Endothelial cell of umbilical vein (primary cell): ENCODE measurements at regions of chr12 and their contacts with region 1.

Region 1: GRCh38 chr12:13094347-13094746 is 9.1 kb downstream of the GSG1 start:
- DNase-seq: peak; percentile 30
- H3K4me3 ChIP-seq: no peak overlapping the region
- H3K27ac ChIP-seq: peak overlapping the region; percentile 59
- H3K4me1 ChIP-seq: peaks cover 42% of the 10 kb centered on the region
- H3K27me3 ChIP-seq: no peaks in the 10 kb centered on the region
- CTCF ChIP-seq: no peak
- POLR2A ChIP-seq: no peak

Region 2: GRCh38 chr12:12999959-13000615 is 94.3 kb before region 1 on chr12 and contains the start of gene HEBP1:
- CTCF ChIA-PET with region 1: interaction called, 3 read pairs
- POLR2A ChIA-PET with region 1: interaction called, 4 read pairs
- dilution Hi-C with region 1: no loop called
- intact Hi-C with region 1: loop called (anchors 1 kb)
- DNase-seq: peak; percentile 89
- H3K4me3 ChIP-seq: peak within 1 kb of the TSS; percentile 55 to 87 (median 85)
- H3K27ac ChIP-seq: peak within 1 kb of the TSS; percentile 71
- H3K4me1 ChIP-seq: peaks cover 22% of the 10 kb centered on the region
- H3K27me3 ChIP-seq: no peaks in the 10 kb centered on the region
- CTCF ChIP-seq: no peak
- POLR2A ChIP-seq: peak; percentile 91
- total RNA-seq, gene HEBP1: 44.8 and 59.5 TPM in 2 replicates

Region 3: GRCh38 chr12:13023811-13024530 is 70.4 kb before region 1 on chr12:
- CTCF ChIA-PET with region 1: interaction called, 5 read pairs
- POLR2A ChIA-PET with region 1: no interaction called
- dilution Hi-C with region 1: no loop called
- intact Hi-C with region 1: loop called (anchors 1 kb)
- DNase-seq: peak; percentile 81
- H3K4me3 ChIP-seq: no peak overlapping the region
- H3K27ac ChIP-seq: no peak overlapping the region
- H3K4me1 ChIP-seq: no peaks in the 10 kb centered on the region
- H3K27me3 ChIP-seq: no peaks in the 10 kb centered on the region
- CTCF ChIP-seq: peak; percentile 55 to 63
- POLR2A ChIP-seq: no peak

Region 4: GRCh38 chr12:13165617-13166041 is 71.3 kb after region 1 on chr12:
- CTCF ChIA-PET with region 1: no interaction called
- POLR2A ChIA-PET with region 1: no interaction called
- dilution Hi-C with region 1: no loop called
- intact Hi-C with region 1: loop called (anchors 1 kb)
- DNase-seq: peak; percentile 85
- H3K4me3 ChIP-seq: no peak overlapping the region
- H3K27ac ChIP-seq: peak overlapping the region; percentile 54
- H3K4me1 ChIP-seq: peaks cover 34% of the 10 kb centered on the region
- H3K27me3 ChIP-seq: no peaks in the 10 kb centered on the region
- CTCF ChIP-seq: no peak
- POLR2A ChIP-seq: no peak

Region 5: DNA sequence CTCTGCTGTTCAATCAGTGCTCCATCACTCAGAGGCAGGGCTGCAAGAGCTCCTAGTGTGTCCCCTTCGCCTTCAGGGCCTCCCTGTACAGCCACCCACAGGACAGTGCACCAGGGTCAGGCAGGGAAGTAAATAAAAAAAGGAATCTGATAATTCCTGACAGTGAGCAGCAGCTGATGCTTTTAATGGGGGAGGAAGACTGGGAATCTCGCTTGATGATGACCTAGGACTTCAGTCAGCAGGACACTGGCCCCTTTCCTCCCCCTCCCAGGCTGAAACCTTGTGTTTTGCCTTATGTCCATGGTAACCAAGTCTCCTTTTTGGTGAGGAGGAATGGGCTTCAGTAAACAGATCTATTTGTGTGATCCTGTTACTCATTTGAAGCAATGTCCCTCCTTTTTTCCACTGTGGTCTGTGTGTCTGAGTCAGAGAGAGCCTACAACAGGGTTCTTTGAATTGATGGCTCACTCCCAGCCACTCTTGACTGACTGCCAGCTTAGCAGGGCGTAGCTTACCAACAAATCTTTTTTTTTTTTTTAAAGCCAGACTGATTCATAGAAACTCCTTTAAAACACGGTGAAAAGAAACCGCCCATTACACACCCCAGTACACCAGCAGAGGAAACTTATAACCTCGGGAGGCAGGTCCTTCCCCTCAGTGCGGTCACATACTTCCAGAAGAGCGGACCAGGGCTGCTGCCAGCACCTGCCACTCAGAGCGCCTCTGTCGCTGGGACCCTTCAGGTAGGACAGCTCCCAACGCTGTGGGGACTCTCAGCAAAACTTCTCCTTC is 102.0 kb after region 1 on chr12 and contains the start of gene EMP1:
- CTCF ChIA-PET with region 1: interaction called, 12 read pairs
- POLR2A ChIA-PET with region 1: interaction called, 15 read pairs
- dilution Hi-C with region 1: no loop called
- intact Hi-C with region 1: no loop called
- DNase-seq: peak; percentile 99
- H3K4me3 ChIP-seq: peak within 1 kb of the TSS; percentile 85 to 99 (median 95)
- H3K27ac ChIP-seq: peak within 1 kb of the TSS; percentile 96
- H3K4me1 ChIP-seq: peaks cover 35% of the 10 kb centered on the region
- H3K27me3 ChIP-seq: no peaks in the 10 kb centered on the region
- CTCF ChIP-seq: no peak
- POLR2A ChIP-seq: peak; percentile 99
- total RNA-seq, gene EMP1: 528 and 577 TPM in 2 replicates

Region 6: DNA sequence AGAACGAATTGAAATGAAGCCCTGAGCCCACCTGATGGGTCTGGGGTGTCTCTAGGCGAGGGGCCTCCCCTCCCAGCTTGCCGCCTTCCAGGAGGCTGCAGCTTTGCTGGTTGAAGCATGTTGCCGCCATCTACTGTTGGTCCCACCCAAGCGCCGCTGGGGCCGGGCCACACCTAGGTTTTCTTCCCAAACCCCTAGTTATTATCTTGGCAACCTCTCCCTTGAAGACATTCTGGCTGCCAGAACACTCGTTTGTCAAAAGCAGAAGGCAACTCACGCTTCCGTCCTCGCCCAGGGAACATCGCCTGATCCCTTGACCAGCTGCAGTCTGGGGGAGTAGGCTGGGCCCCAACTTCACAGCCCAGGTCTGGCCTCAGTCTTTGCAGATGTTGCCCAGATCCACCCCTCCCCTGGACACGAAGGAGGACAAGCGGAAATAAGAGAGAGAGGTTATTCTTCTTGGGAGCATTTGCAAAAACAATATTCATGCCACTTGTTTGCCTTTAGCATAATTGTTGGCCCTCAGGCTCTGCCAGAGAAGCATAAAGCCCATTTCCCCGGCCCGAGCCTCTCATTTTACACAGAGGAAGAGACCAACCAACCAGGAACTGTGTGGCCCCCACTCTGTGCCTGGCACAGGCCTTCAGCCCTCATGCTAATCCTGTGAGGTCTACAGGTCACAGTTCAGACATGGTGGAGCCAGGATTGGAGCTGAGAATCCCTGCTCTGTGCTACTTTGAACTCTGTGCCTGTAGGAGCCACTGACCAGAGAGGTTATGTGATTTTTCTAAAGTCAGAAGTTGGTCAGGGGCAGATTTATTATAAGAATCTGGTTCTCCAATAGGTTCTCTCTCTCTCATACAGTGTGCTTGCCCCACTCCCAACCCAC is 108.9 kb after region 1 on chr12:
- CTCF ChIA-PET with region 1: interaction called, 89 read pairs
- POLR2A ChIA-PET with region 1: interaction called, 6 read pairs
- dilution Hi-C with region 1: no loop called
- intact Hi-C with region 1: loop called (anchors 1 kb)
- DNase-seq: peak; percentile 46
- H3K4me3 ChIP-seq: no peak overlapping the region
- H3K27ac ChIP-seq: peak overlapping the region; percentile 97
- H3K4me1 ChIP-seq: peaks cover 90% of the 10 kb centered on the region
- H3K27me3 ChIP-seq: no peaks in the 10 kb centered on the region
- CTCF ChIP-seq: peak; percentile 28 to 46
- POLR2A ChIP-seq: no peak

Region 7: DNA sequence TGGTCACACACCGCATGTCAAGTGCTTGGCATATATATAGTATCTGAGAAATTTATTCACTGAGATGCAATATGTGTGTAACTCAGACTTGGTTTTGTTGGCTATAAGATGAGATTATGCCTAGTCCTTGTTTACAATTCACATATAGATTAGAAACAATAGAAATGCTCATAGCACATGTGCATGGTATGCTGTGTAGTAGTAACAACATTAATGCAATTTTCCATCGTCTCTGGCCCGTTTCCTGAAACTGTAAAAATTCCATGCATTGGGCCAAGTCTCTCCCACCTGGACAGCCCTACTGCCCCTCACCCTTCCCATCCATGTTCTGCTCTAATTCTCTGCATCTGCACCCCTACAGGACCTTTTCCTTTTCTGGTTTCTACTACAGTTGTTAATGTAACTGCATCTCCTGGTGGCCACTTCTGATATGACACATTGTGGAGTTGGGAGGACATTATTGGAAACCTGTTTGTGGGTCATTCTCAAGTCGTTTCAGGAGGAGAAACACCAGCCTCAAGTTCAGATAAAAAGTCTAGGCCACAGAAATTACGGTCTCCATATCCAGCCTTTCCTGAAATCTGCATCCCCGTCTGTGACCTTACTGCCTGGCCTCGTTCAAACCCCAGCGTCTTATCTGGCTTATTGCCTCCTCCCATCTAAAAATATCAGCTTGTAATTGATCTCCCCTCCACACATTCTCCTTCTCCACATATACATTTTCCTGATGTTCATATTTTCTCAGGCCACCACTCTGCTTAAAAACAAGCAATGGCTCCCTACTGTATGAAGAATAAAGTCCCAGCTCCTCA is 139.7 kb after region 1 on chr12:
- CTCF ChIA-PET with region 1: no interaction called
- POLR2A ChIA-PET with region 1: no interaction called
- dilution Hi-C with region 1: no loop called
- intact Hi-C with region 1: loop called (anchors 1 kb)
- DNase-seq: peak; percentile 77
- H3K4me3 ChIP-seq: no peak overlapping the region
- H3K27ac ChIP-seq: no peak overlapping the region
- H3K4me1 ChIP-seq: peaks cover 3% of the 10 kb centered on the region
- H3K27me3 ChIP-seq: no peaks in the 10 kb centered on the region
- CTCF ChIP-seq: peak; percentile 70 to 83
- POLR2A ChIP-seq: no peak